HEK293 (cell line): ENCODE measurements at regions of chr20 and their contacts with region 1.

Region 1: DNA sequence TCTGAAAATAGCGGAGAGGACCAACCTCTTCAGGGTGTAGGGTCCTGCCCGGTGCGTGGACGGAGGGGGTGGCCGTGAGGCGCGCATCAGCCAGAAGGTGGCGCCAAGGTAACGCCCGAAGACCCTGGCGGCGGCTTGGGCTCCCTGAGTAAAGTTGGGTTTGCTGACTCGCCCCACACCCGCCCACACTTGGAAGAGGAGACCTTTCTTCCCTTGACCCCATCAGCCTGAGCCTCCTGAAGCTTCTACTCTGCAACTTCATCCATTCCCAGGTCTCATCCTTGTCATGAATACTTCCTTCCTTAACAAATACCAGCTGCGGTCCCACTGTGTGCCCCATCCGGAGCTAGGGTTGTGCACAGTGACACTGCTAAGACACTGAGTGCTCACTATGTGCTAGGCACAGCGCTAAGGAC is 14.6 kb downstream of the CD40 start:
- H3K4me3 ChIP-seq: no peak overlapping the region
- H3K27ac ChIP-seq: no peak overlapping the region
- H3K4me1 ChIP-seq: no peaks in the 10 kb centered on the region
- CTCF ChIP-seq: peak; percentile 93

Region 2: DNA sequence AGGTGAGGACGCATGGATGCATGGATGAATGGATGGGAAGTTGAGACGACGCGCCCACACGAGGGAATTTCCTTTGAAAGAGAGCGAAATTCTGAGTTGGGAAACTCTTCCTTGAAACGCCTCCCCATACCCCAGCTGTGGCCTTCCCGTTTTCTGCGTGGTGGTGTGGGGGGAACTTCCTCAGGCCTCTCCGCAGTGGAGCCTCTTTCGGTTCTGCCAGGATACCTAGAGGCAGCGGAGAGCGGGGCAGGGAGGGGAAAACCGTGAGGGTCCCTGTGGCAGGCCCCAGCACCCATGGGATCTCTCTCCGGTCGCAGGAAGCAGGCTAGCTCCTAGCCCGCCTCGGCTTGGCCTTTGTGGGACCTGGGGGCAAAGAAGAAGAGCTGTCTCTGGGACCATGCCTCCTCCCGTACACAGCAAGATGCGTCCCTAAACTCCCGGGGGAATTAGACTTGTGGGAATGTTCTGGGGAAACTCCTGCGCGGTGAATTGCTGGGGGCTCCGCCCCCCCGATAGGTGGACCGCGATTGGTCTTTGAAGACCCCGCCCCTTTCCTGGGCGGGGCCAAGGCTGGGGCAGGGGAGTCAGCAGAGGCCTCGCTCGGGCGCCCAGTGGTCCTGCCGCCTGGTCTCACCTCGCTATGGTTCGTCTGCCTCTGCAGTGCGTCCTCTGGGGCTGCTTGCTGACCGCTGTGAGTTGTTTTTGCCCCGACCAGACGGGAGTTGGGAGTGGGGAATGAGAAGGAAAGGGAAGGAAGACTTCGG is 14.8 kb before region 1 on chr20 and contains the start of gene CD40:
- CTCF ChIA-PET with region 1: interaction called, 13 read pairs
- POLR2A ChIA-PET with region 1: no interaction called
- H3K4me3 ChIP-seq: no peak within 1 kb of the TSS
- H3K27ac ChIP-seq: no peak within 1 kb of the TSS
- H3K4me1 ChIP-seq: no peaks in the 10 kb centered on the region
- CTCF ChIP-seq: no peak

Region 3: DNA sequence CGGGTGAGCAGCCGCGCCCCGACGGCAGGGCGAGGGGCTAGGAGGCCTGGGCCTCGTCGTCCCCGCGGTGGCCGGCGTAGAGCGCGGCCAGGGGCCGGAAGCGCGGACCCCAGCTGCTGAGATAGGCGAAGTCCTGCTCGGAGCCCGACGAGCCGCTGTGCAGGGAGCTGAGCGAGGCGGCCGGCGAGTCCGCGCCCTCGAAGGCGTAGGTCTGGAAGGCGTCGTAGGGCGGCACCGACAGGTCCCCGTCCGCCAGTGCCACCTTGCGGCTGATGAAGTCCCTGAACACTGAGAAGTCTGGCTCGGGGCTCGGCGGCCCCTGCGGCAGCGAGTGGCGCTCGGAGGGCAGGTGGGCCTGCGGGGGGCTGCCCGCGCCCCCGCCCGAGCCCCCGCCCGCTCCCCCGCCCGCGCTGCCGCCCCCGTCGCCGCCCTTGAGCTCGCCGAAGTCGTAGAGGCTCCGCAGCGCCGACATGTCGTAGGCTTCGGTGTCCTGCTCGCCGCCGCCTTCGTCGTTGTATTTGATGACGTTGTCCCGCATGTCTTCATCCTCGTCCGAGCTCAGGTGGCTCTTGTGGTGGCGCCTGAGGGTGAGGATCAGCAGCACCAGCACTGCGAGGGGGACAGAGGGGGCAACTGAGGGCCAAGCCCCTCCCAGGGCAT is 41.9 kb after region 1 on chr20:
- CTCF ChIA-PET with region 1: interaction called, 17 read pairs
- POLR2A ChIA-PET with region 1: no interaction called
- H3K4me3 ChIP-seq: no peak overlapping the region
- H3K27ac ChIP-seq: no peak overlapping the region
- H3K4me1 ChIP-seq: no peaks in the 10 kb centered on the region
- CTCF ChIP-seq: peak; percentile 8; the same call in 1 of the 2 replicates

Region 4: DNA sequence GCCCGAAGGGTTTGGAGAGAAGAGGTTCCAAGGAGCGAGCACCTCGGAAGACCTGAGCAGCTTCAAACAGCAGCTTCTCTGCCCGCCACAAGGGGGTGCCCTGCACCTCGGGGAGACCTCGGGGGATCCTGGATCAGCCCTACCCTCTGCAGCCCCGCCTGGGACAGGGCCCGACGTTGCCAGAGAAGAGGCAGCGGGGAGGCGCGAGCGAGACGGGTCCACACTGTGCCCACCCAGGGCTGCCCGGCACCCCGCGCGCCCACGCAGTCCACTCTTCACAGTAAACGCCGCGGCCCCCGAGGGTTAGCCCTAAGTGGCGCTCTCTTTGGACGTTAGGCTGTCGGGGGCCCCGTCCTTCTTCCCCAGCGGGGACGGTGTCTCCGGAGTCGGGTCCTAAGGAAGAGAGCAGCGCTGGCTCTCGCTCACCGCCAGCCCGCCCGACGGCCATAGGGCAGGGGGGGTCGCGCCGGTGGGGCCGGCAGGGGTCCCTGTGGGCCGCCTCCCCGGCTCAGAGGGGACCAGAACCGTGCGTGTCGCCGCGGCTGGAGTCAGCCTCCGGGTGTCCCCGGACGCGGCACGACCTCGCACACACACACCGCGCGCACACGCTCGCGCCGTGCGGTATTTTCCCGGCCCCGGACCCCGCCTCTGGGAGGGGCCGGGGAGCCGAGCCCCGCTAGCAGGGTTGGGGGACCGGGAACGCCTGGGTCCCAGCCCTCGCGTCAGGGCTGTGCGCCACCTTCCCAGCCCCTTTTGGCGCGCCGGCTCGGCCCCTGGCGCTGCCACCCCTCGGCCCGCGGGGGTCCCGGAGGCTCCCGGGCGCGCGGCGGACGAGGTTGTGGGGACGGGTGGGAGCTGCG is 174.7 kb after region 1 on chr20:
- CTCF ChIA-PET with region 1: interaction called, 12 read pairs
- POLR2A ChIA-PET with region 1: no interaction called
- H3K4me3 ChIP-seq: peak overlapping the region; percentile 16
- H3K27ac ChIP-seq: no peak overlapping the region
- H3K4me1 ChIP-seq: peaks cover 3% of the 10 kb centered on the region; the same call in 1 of the 2 replicates
- CTCF ChIP-seq: peak; percentile 87

Region 5: DNA sequence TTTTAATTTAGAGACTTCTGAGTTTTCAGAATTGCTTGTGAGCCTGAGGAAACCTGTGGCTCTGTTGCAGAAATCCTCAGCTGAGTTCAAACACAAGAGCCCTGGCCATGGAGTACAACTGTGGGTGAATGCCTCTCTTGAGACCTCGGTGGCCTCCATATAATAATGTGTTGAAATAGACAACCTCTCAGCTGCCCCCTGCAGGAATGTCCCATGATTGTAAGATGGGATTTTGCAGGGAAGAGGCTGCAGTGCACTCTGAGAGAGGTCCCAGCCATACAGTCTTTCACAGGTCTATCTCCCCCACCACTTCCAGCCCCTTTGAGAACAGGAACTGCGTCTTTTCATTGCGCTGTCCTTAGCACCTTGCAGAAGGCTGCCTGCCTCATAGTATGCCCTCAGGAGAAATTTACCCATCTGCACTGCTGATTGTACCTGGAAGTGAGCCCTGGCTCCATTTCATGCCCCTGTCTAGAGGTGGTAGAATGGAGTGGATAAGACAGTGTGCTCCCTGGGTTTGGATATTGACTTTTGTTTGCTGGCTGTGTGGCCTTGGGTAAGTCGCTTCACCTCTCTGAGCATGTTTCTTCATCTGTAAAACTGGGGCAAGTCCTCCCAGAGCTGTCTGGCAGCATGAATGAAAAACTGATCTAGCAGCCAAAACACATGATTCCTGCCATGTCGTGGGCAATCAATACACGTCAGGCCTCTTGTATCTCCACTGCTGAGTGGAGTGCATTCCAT is 192.4 kb after region 1 on chr20:
- CTCF ChIA-PET with region 1: interaction called, 20 read pairs
- POLR2A ChIA-PET with region 1: no interaction called
- H3K4me3 ChIP-seq: no peak overlapping the region
- H3K27ac ChIP-seq: no peak overlapping the region
- H3K4me1 ChIP-seq: no peaks in the 10 kb centered on the region
- CTCF ChIP-seq: no peak